HepG2 (cell line): ENCODE measurements at regions of chr7 and their contacts with region 1.

Region 1: GRCh38 chr7:137891016-137891655 is 44.4 kb upstream of the DGKI start:
- DNase-seq: peak; percentile 71
- ATAC-seq: peak; percentile 9; the same call in 1 of the 3 replicates
- H3K4me3 ChIP-seq: no peak overlapping the region
- H3K27ac ChIP-seq: peak overlapping the region; percentile 45
- H3K4me1 ChIP-seq: peaks cover 62% of the 10 kb centered on the region
- H3K27me3 ChIP-seq: no peaks in the 10 kb centered on the region
- CTCF ChIP-seq: no peak
- EP300 ChIP-seq: peak in 1 of 2 experiments; percentile 37; a peak in 1 of 4 replicates
- POLR2A ChIP-seq: no peak
- RAD21 ChIP-seq: no peak

Region 2: GRCh38 chr7:137846827-137847567 is 44.1 kb before region 1 on chr7 and contains the start of gene DGKI:
- CTCF ChIA-PET with region 1: no interaction called
- POLR2A ChIA-PET with region 1: no interaction called
- in situ Hi-C with region 1: no loop called
- intact Hi-C with region 1: loop called (anchors 1 kb)
- DNase-seq: no peak
- ATAC-seq: peak; percentile 50
- H3K4me3 ChIP-seq: peak within 1 kb of the TSS in 2 of 3 experiments; percentile 49 to 66; a peak in 3 of 6 replicates
- H3K27ac ChIP-seq: no peak within 1 kb of the TSS
- H3K4me1 ChIP-seq: peaks cover 12% of the 10 kb centered on the region
- H3K27me3 ChIP-seq: peaks cover 3 to 29% of the 10 kb centered on the region in 2 experiments; a peak in 4 of 5 replicates
- CTCF ChIP-seq: no peak
- EP300 ChIP-seq: no peak
- POLR2A ChIP-seq: no peak; a peak in 1 of 4 replicates
- RAD21 ChIP-seq: no peak
- total RNA-seq, gene DGKI: 0.09 TPM in 1 of 2 replicates, not detected in the other